ENCODE measurements at regions of chr16 and their contacts with region 1.

Region 1: GRCh38 chr16:30065851-30066659 is 495 bp downstream of the ALDOA start:
- DNase-seq: peak; percentile 58
- H3K27ac ChIP-seq: peak overlapping the region; percentile 99
- CTCF ChIP-seq: no peak

Region 2: DNA sequence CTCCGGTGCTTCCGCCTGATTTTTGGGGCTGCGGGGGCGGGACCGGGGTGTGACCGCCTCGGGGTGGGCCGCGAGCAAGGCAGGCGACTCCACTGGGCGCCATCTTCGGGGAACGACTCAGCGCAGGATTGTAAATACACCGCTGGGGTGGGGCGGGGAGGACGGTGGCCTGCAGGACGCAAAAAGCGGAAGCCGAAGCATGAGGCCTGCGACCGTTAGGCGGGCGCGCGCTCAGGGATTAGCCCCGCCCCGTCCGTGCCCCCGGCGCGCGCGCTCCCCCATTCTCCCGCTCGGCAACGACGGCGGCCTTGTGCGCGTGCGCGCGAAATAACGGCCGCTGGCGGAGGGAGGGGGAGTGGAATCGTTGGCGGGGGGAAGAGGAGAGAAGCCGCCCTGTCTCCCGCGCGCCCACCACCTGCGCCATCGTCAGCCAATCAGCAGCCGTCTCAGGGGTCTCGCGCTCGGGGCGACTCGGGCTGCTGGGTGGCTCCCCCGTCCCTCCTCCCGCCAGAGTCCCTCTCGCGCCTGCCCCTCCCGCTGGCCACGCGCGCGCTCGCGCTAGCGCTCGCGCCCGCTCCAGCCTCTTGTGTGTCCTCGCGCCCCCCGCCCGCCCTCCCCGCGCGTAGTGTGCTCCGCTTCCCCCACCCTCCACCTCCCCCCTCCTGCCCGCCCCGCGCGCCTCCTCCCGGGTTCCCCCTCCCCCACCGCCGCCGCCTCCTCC is 260.5 kb before region 1 on chr16:
- CTCF ChIA-PET with region 1: no interaction called
- POLR2A ChIA-PET with region 1: interaction called, 12 read pairs
- DNase-seq: peak; percentile 87
- H3K27ac ChIP-seq: peak overlapping the region; percentile 99
- CTCF ChIP-seq: no peak